ENCODE measurements at regions of chr6 and their contacts with region 1.

Region 1: DNA sequence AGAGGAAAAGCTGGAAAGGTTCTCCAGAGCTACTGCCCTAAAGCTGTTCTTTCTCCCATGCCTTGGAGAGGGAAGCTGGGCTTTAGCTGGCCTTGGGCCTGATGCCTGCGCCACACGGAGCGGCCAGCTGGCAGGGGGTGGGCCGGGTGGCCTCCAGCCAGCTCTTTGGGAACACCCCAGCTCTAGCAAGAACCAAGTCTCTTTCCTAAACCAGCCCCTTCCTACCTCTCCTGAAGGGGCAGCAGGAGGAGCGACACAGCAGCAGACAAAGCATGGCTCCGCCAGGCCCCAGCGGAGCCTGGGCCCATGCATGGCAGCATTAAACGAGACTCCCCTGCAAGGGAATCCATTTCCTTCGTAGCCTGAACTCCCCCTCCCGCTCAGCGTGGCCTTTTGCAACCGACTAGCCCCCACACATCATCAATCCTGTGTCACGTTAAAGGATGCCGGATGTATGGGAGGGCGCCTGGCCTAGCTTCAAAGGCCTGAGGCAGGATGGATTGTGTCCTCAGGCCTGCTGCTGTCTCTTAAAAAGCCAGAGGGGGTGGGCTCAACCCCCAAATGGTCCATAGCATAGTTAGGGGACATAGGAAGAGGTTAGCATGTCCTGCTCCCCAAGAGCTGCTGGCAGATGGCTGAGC is 14.0 kb downstream of the MRPS18A start:
- DNase-seq: no peak
- ATAC-seq: no peak
- H3K4me3 ChIP-seq: no peak overlapping the region
- H3K27ac ChIP-seq: no peak overlapping the region
- H3K4me1 ChIP-seq: peaks cover 25 to 26% of the 10 kb centered on the region in 2 experiments
- H3K27me3 ChIP-seq: no peaks in the 10 kb centered on the region
- CTCF ChIP-seq: no peak
- EP300 ChIP-seq: no peak
- POLR2A ChIP-seq: no peak
- RAD21 ChIP-seq: no peak

Region 2: DNA sequence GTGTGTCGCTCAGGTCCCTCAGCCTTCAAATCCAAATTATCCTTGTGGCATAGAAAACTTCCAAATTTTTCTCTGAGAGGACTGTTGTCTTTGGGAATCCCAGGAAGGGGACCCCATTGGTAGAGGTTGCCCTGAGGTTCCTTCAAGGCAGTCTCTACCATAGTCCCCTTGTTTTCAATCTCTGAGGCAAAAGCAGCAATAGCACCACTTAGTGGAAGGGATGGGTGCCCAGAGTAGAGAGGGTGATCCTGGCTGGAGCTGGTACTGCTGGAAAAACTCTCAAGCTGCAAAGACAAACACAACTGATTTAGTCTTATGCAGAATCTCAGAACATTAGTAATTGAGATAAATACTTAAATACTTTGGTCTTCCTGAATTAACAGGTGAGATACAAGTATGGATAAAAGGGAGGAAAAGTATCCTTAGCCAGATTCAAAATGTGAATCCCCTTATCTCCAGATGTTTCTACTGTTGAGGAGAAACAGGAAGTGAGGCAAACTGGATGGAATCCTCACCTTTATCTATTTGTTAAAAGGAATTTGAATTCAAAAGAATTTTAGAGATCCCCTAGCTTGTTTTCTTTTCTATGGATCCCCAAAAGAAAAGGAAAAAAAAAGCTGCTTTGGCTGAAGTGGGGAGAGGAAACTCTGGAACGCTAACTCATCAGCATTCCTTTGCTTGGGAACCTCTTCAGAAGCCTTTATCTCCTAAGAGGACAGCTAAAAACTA is 317.5 kb before region 1 on chr6:
- CTCF ChIA-PET with region 1: no interaction called
- POLR2A ChIA-PET with region 1: no interaction called
- in situ Hi-C with region 1: no loop called
- intact Hi-C with region 1: no loop called
- DNase-seq: peak in 2 of 4 experiments; percentile 21 to 22
- ATAC-seq: peak; percentile 75
- H3K4me3 ChIP-seq: no peak overlapping the region
- H3K27ac ChIP-seq: no peak overlapping the region
- H3K4me1 ChIP-seq: no peaks in the 10 kb centered on the region
- H3K27me3 ChIP-seq: no peaks in the 10 kb centered on the region
- CTCF ChIP-seq: peak; percentile 37 to 45 (median 39); a peak in 5 of 6 replicates
- EP300 ChIP-seq: no peak
- POLR2A ChIP-seq: no peak
- RAD21 ChIP-seq: peak in 1 of 2 experiments; percentile 35; a peak in 2 of 4 replicates

Region 3: GRCh38 chr6:43584892-43585570 is 88.5 kb before region 1 on chr6:
- CTCF ChIA-PET with region 1: no interaction called
- POLR2A ChIA-PET with region 1: no interaction called
- in situ Hi-C with region 1: no loop called
- intact Hi-C with region 1: no loop called
- DNase-seq: no peak
- ATAC-seq: peak; percentile 43; the same call in 2 of the 3 replicates
- H3K4me3 ChIP-seq: no peak overlapping the region
- H3K27ac ChIP-seq: no peak overlapping the region
- H3K4me1 ChIP-seq: no peaks in the 10 kb centered on the region
- H3K27me3 ChIP-seq: no peaks in the 10 kb centered on the region
- CTCF ChIP-seq: no peak
- EP300 ChIP-seq: no peak
- POLR2A ChIP-seq: no peak
- RAD21 ChIP-seq: no peak

Region 4: GRCh38 chr6:43687437-43688347 is 14.1 kb after region 1 on chr6 and contains the start of gene MRPS18A:
- CTCF ChIA-PET with region 1: no interaction called
- POLR2A ChIA-PET with region 1: interaction called, 21 read pairs
- in situ Hi-C with region 1: no loop called
- intact Hi-C with region 1: no loop called
- DNase-seq: peak; percentile 92 to 94 (median 94)
- ATAC-seq: peak; percentile 99
- H3K4me3 ChIP-seq: peak within 1 kb of the TSS; percentile 87
- H3K27ac ChIP-seq: peak within 1 kb of the TSS; percentile 91
- H3K4me1 ChIP-seq: peaks cover 4 to 29% of the 10 kb centered on the region in 2 experiments; a peak in 3 of 5 replicates
- H3K27me3 ChIP-seq: no peaks in the 10 kb centered on the region
- CTCF ChIP-seq: no peak
- EP300 ChIP-seq: no peak
- POLR2A ChIP-seq: peak; percentile 94
- RAD21 ChIP-seq: peak in 1 of 2 experiments; percentile 1; a peak in 1 of 4 replicates
- polyA plus RNA-seq, gene MRPS18A: 204 to 243 TPM

Measured in K562 (cell line).